ENCODE measurements at regions of chr13 and their contacts with region 1.

Region 1: GRCh38 chr13:71219698-71220415 is 647.1 kb downstream of the DACH1 start:
- DNase-seq: no peak
- ATAC-seq: no peak
- H3K4me3 ChIP-seq: no peak overlapping the region
- H3K27ac ChIP-seq: no peak overlapping the region
- H3K4me1 ChIP-seq: peaks cover 0 to 14% (median 0%) of the 10 kb centered on the region in 9 donors
- H3K27me3 ChIP-seq: no peaks in the 10 kb centered on the region
- CTCF ChIP-seq: no peak

Region 2: DNA sequence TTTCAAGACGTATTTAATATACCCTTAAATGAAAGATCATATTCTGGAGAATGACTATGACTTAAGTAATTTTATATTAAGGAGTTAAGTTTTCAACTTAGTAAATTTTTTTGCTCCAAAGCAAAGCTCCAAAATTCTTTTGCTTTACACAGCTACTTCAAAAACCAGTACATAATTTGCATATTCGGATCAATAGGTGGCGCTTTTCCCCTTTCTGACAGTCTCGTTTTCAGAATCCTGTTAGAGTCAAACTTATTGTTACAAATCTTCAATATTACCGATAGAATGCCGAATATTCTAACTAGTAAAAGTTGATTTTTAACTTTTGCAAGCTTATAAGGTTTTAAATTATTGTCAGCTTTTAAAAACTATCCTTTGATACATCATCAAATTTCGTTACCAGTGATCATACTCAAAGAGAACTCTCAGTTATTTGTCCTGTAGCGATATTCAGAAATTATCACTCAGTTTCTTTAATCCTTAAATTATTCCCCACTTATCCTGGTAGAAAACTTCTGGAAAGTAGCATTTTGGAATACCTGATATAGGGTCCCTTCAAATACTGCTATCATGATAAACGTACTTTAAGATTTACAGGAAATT is 258.9 kb before region 1 on chr13:
- intact Hi-C with region 1: loop called in 1 of 10 experiments (anchors 5 kb)
- DNase-seq: no peak
- ATAC-seq: no peak
- H3K4me3 ChIP-seq: no peak overlapping the region
- H3K27ac ChIP-seq: no peak overlapping the region
- H3K4me1 ChIP-seq: no peaks in the 10 kb centered on the region
- H3K27me3 ChIP-seq: no peaks in the 10 kb centered on the region
- CTCF ChIP-seq: peak; percentile 22 to 75 (median 60)

Region 3: GRCh38 chr13:71156550-71156949 is 63.3 kb before region 1 on chr13:
- intact Hi-C with region 1: no loop called
- DNase-seq: no peak
- ATAC-seq: no peak
- H3K4me3 ChIP-seq: no peak overlapping the region
- H3K27ac ChIP-seq: no peak overlapping the region
- H3K4me1 ChIP-seq: no peaks in the 10 kb centered on the region
- H3K27me3 ChIP-seq: no peaks in the 10 kb centered on the region
- CTCF ChIP-seq: no peak

Region 4: GRCh38 chr13:71712988-71713653 is 493.3 kb after region 1 on chr13:
- intact Hi-C with region 1: no loop called
- DNase-seq: peak in 1 of 2 donors; percentile 33
- ATAC-seq: peak in 7 of 8 donors; percentile 74 to 93 (median 86)
- H3K4me3 ChIP-seq: no peak overlapping the region
- H3K27ac ChIP-seq: peak overlapping the region in 4 of 10 donors; percentile 2 to 37 (median 22)
- H3K4me1 ChIP-seq: peaks cover 0 to 19% (median 3%) of the 10 kb centered on the region in 9 donors
- H3K27me3 ChIP-seq: no peaks in the 10 kb centered on the region
- CTCF ChIP-seq: no peak